Body of pancreas (tissue), 4 donors: ENCODE measurements at regions of chr1 and their contacts with region 1.

Region 1: GRCh38 chr1:224519874-224520273 is 85.3 kb upstream of the WDR26 start:
- DNase-seq: no peak
- ATAC-seq: no peak
- H3K4me3 ChIP-seq: no peak overlapping the region
- H3K27ac ChIP-seq: no peak overlapping the region
- H3K4me1 ChIP-seq: no peaks in the 10 kb centered on the region
- H3K27me3 ChIP-seq: no peaks in the 10 kb centered on the region
- CTCF ChIP-seq: no peak
- POLR2A ChIP-seq: no peak

Region 2: GRCh38 chr1:224377676-224378006 is 142.2 kb before region 1 on chr1:
- intact Hi-C with region 1: no loop called
- DNase-seq: no peak
- ATAC-seq: no peak
- H3K4me3 ChIP-seq: no peak overlapping the region
- H3K27ac ChIP-seq: peak overlapping the region in 1 of 4 donors; percentile 43
- H3K4me1 ChIP-seq: no peaks in the 10 kb centered on the region
- H3K27me3 ChIP-seq: no peaks in the 10 kb centered on the region
- CTCF ChIP-seq: no peak
- POLR2A ChIP-seq: no peak

Region 3: GRCh38 chr1:224922404-224923164 is 402.7 kb after region 1 on chr1:
- intact Hi-C with region 1: loop called (anchors 5 kb)
- DNase-seq: peak; percentile 37 to 70 (median 62)
- ATAC-seq: peak; percentile 92
- H3K4me3 ChIP-seq: no peak overlapping the region
- H3K27ac ChIP-seq: no peak overlapping the region
- H3K4me1 ChIP-seq: peaks cover 19% of the 10 kb centered on the region
- H3K27me3 ChIP-seq: no peaks in the 10 kb centered on the region
- CTCF ChIP-seq: peak; percentile 46 to 95 (median 85)
- POLR2A ChIP-seq: no peak